HCT116 (cell line): ENCODE measurements at regions of chr9 and their contacts with region 1.

Region 1: GRCh38 chr9:130940693-130941576 is 1.9 kb upstream of the FIBCD1 start:
- DNase-seq: peak; percentile 75
- ATAC-seq: peak; percentile 77
- H3K4me3 ChIP-seq: peak overlapping the region in 1 of 2 experiments; percentile 34; a peak in 3 of 4 replicates
- H3K27ac ChIP-seq: no peak overlapping the region
- H3K4me1 ChIP-seq: peaks cover 21 to 45% of the 10 kb centered on the region in 2 experiments
- H3K27me3 ChIP-seq: no peaks in the 10 kb centered on the region
- CTCF ChIP-seq: peak in 2 of 3 experiments; percentile 86 to 93; a peak in 4 of 6 replicates
- POLR2A ChIP-seq: no peak
- RAD21 ChIP-seq: no peak

Region 2: DNA sequence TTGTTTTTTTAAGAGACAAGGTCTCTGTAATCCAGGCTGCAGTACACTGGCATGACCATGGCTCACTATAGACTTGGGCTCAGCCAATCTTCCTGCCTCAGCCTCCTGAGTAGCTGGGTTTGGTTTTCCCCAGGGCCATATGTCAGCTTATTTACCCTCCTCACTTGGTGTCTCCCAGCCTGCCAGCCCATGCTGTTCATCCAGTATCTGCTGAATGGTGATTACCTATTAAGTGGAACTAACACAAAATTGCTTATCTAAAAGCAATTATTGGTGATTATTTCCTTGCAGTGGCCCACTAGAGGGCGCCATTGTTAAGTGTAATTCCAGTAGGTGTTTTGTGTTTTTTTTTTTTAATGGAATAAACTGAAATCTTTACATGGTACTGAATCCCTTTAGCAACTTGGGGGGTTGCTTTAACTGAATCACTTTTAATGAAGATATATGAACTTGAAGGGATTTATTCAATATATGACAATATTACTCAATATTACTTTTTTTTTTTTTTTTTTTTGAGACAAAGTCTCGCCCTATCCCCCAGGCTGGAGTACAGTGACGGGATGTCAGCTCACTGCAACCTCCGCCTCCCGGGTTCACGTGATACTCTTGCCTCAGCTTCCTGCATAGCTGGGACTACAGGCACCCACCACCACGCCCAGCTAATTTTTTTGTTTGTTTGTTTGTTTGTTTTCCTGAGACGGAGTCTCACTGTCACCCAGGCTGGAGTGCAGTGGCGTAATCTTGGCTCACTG is 233.5 kb before region 1 on chr9:
- CTCF ChIA-PET with region 1: no interaction called
- POLR2A ChIA-PET with region 1: no interaction called
- RAD21 ChIA-PET with region 1: no interaction called
- intact Hi-C with region 1: loop called (anchors 1 kb)
- DNase-seq: no peak
- ATAC-seq: peak; percentile 72
- H3K4me3 ChIP-seq: no peak overlapping the region
- H3K27ac ChIP-seq: no peak overlapping the region
- H3K4me1 ChIP-seq: peaks cover 0 to 12% of the 10 kb centered on the region in 2 experiments; a peak in 1 of 4 replicates
- H3K27me3 ChIP-seq: no peaks in the 10 kb centered on the region
- CTCF ChIP-seq: peak; percentile 60 to 87 (median 83)
- POLR2A ChIP-seq: no peak
- RAD21 ChIP-seq: peak; percentile 84